Ovary (tissue), 10 donors: ENCODE measurements at regions of chr1 and their contacts with region 1.

Region 1: GRCh38 chr1:248858891-248859889 is at the start of gene ZNF692:
- DNase-seq: peak; percentile 95 to 96 (median 96)
- H3K4me3 ChIP-seq: peak within 1 kb of the TSS; percentile 61
- H3K27ac ChIP-seq: peak within 1 kb of the TSS; percentile 71 to 76
- H3K4me1 ChIP-seq: peaks cover 19% of the 10 kb centered on the region
- H3K27me3 ChIP-seq: no peaks in the 10 kb centered on the region
- CTCF ChIP-seq: no peak
- EP300 ChIP-seq: no peak
- POLR2A ChIP-seq: peak; percentile 78
- total RNA-seq, gene ZNF692: 27.4 to 47.7 (median 35.4) TPM

Region 2: DNA sequence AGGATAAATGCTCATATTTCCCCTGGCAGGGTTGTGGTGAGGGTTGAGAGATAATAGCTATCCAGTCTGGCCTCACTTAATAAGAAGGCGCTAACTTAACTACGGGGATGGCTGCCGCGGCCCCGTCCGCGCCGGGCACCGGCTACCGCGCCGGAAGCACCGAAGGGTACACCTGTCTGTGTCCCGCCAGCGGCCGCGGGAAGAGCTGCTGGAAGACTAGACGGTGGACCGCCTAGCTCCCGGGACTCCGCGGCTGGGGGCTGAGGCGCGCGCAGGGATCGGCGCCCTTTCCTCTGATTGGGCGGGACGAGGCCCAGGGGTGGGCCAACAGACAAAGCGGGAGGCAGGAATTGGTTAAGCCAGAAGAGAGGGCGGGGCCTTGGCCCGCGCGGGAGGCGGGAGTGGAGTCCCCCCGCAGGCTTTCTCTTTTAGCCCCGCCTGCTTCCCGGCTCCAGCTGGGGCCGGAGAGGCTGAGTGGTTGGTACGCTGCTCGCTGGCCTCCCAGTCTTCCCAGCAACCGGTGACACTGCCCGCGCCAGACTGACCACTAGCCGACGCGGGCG is 21.3 kb before region 1 on chr1 and contains the start of gene ZNF672:
- intact Hi-C with region 1: loop called in 1 of 4 experiments (anchors 2 kb)
- DNase-seq: peak; percentile 97 to 99 (median 98)
- H3K4me3 ChIP-seq: peak within 1 kb of the TSS; percentile 99
- H3K27ac ChIP-seq: peak within 1 kb of the TSS; percentile 95 to 96
- H3K4me1 ChIP-seq: no peaks in the 10 kb centered on the region
- H3K27me3 ChIP-seq: no peaks in the 10 kb centered on the region
- CTCF ChIP-seq: peak in 1 of 3 donors; percentile 8
- EP300 ChIP-seq: no peak
- POLR2A ChIP-seq: peak; percentile 90
- total RNA-seq, gene ZNF672: 15.1 to 29.5 (median 21.6) TPM